ENCODE measurements at regions of chr3 and their contacts with region 1.

Region 1: GRCh38 chr3:183370391-183370790 is 58.0 kb downstream of the MCF2L2 start:
- DNase-seq: no peak
- ATAC-seq: no peak
- H3K4me3 ChIP-seq: no peak overlapping the region
- H3K27ac ChIP-seq: peak overlapping the region; percentile 18 to 81 (median 76)
- H3K4me1 ChIP-seq: peaks cover 0 to 12% of the 10 kb centered on the region in 2 donors
- H3K27me3 ChIP-seq: no peaks in the 10 kb centered on the region
- CTCF ChIP-seq: no peak
- POLR2A ChIP-seq: no peak

Region 2: GRCh38 chr3:182967218-182968204 is 402.9 kb before region 1 on chr3:
- in situ Hi-C with region 1: no loop called
- intact Hi-C with region 1: no loop called
- DNase-seq: no peak
- ATAC-seq: no peak
- H3K4me3 ChIP-seq: no peak overlapping the region
- H3K27ac ChIP-seq: peak overlapping the region in 2 of 4 donors; percentile 39 to 42
- H3K4me1 ChIP-seq: peaks cover 53 to 62% of the 10 kb centered on the region in 2 donors
- H3K27me3 ChIP-seq: no peaks in the 10 kb centered on the region
- CTCF ChIP-seq: no peak
- POLR2A ChIP-seq: no peak

Region 3: GRCh38 chr3:183339461-183340079 is 30.8 kb before region 1 on chr3:
- in situ Hi-C with region 1: no loop called
- intact Hi-C with region 1: loop called (anchors 5 kb)
- DNase-seq: no peak
- ATAC-seq: no peak
- H3K4me3 ChIP-seq: no peak overlapping the region
- H3K27ac ChIP-seq: no peak overlapping the region
- H3K4me1 ChIP-seq: no peaks in the 10 kb centered on the region
- H3K27me3 ChIP-seq: no peaks in the 10 kb centered on the region
- CTCF ChIP-seq: no peak
- POLR2A ChIP-seq: no peak

Measured in gastrocnemius medialis (tissue), 4 donors.